CD4-positive, alpha-beta memory T cell (primary cell): ENCODE measurements at regions of chr3 and their contacts with region 1.

Region 1: DNA sequence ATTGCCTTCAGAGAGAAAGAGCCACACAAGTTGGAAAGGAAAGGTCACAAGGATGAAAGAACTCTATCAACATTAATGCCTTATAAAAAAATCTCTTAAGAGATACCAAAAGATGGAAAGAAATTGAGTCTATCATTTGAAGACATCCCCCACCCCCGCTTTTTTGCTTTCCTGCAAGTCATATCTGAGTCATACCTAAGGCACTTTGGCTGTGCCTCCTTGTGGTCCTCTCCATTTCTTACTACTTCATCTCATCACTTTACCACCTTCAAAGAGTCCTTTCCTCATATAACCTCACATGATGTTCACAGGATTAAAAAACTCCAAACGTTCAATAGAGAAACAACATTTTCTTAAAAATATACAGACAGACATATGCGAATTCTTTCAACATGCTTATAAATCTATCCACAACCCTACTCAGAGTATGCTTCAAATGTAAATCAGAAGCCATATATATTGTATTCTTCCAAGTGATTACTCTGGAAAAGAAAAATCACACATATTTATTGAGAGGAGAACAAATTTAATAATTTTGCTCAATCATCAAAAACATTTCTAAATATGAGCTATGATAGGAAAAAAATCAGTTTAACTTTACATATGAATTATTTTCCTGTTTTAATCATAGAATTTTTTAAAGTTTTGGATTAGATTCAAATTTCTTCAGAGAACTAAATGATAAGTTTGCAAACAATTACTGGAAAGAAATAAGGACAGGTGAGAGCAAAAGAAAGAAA is 1003.9 kb upstream of the CFAP20DC start:
- DNase-seq: peak in 1 of 5 donors; percentile 64
- H3K4me3 ChIP-seq: no peak overlapping the region
- H3K4me3 Mint-ChIP-seq: peak overlapping the region in 5 of 8 donors; percentile 10 to 60 (median 55)
- H3K27ac ChIP-seq: no peak overlapping the region
- H3K27ac Mint-ChIP-seq: peak overlapping the region in 6 of 7 donors; percentile 10 to 81 (median 18)
- H3K4me1 ChIP-seq: peaks cover 64% of the 10 kb centered on the region
- H3K4me1 Mint-ChIP-seq: peaks cover 35 to 63% (median 50%) of the 10 kb centered on the region in 4 donors
- H3K27me3 ChIP-seq: no peaks in the 10 kb centered on the region
- H3K27me3 Mint-ChIP-seq: no peaks in the 10 kb centered on the region

Region 2: GRCh38 chr3:60076331-60076730 is 22.6 kb after region 1 on chr3:
- CTCF ChIA-PET with region 1: interaction called, 5 read pairs
- POLR2A ChIA-PET with region 1: interaction called, 9 read pairs
- intact Hi-C with region 1: loop called (anchors 2 kb)
- DNase-seq: no peak
- H3K4me3 ChIP-seq: no peak overlapping the region
- H3K4me3 Mint-ChIP-seq: peak overlapping the region; percentile 49 to 77 (median 68)
- H3K27ac ChIP-seq: no peak overlapping the region
- H3K27ac Mint-ChIP-seq: peak overlapping the region in 6 of 7 donors; percentile 2 to 83 (median 60)
- H3K4me1 ChIP-seq: peaks cover 35% of the 10 kb centered on the region
- H3K4me1 Mint-ChIP-seq: peaks cover 27 to 67% (median 44%) of the 10 kb centered on the region in 4 donors
- H3K27me3 ChIP-seq: no peaks in the 10 kb centered on the region
- H3K27me3 Mint-ChIP-seq: no peaks in the 10 kb centered on the region